ENCODE measurements at regions of chr12 and their contacts with region 1.

Region 1: GRCh38 chr12:49342066-49342913 is 4.4 kb upstream of the DNAJC22 start:
- DNase-seq: peak; percentile 86
- ATAC-seq: peak; percentile 72
- H3K4me3 ChIP-seq: peak overlapping the region; percentile 38 to 71 (median 58); a peak in 5 of 6 replicates
- H3K27ac ChIP-seq: no peak overlapping the region
- H3K4me1 ChIP-seq: peaks cover 51% of the 10 kb centered on the region
- H3K27me3 ChIP-seq: peaks cover 20 to 90% of the 10 kb centered on the region in 2 experiments; a peak in 4 of 5 replicates
- CTCF ChIP-seq: peak; percentile 91
- EP300 ChIP-seq: no peak
- POLR2A ChIP-seq: no peak
- RAD21 ChIP-seq: peak; percentile 82

Region 2: DNA sequence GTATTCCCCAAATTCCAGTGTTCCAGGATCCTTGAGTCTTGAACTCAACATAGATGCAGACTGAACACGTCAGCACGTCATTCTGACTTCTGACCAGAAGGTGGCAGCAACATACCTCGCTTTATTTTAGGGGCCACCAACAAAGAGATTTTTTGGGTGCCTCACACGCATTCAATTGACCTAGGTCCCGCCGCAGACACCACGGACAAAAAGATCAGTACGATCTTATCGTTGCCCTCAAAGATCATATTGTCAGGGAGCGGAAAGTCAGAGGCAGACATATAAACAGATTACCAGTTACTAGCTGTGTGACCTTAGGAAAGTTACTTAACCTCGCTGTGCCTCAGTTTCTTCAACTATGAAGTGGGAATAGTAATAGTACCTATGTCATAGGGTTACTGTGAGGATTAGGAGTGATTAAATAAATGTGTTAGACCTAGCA is 53.9 kb before region 1 on chr12:
- CTCF ChIA-PET with region 1: interaction called, 16 read pairs
- POLR2A ChIA-PET with region 1: interaction called, 4 read pairs
- in situ Hi-C with region 1: loop called (anchors 10 kb)
- intact Hi-C with region 1: loop called (anchors 2 kb)
- DNase-seq: peak; percentile 34
- ATAC-seq: peak; percentile 25; the same call in 1 of the 3 replicates
- H3K4me3 ChIP-seq: no peak overlapping the region
- H3K27ac ChIP-seq: no peak overlapping the region
- H3K4me1 ChIP-seq: peaks cover 24% of the 10 kb centered on the region
- H3K27me3 ChIP-seq: peaks cover 1 to 48% of the 10 kb centered on the region in 2 experiments
- CTCF ChIP-seq: peak; percentile 84
- EP300 ChIP-seq: no peak
- POLR2A ChIP-seq: no peak
- RAD21 ChIP-seq: peak; percentile 55; the same call in 1 of the 2 replicates

Region 3: DNA sequence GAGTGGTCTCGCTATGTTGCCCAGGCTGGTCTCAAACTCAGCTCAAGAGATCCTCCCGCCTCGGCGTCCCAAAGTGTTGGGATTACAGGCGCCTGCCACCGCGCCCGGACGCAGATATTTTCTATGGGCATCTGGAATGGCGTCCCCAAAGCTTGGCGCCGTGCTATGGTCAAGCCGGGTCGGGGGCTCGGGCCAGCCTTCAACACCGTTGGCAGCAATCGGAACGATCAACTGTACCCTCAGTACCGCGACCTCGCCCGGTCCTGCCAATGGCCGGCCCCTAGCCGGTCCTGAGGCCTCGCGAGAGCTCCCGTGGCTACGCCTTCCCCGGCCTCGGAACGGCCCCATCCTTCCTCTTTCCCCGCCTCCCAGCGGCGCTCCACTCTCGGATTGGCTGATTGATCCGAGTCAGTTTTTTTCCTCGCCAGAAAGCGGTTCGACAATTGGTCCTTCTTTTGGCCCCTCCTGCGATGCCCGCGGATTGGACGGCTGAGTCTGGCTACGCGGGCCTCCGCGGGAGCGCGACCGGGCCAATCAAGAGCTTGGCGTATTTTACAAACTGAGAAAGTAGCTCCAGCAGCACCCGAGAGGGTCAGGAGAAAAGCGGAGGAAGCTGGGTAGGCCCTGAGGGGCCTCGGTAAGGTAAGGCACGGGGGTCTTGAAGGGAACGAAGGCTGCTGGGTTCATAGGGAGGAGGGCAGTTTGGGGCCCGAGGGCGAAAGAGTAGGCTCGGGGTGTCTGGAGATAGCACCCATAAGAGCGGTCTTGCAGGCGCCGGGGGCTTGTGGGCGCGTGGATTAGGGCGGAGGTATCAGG is 19.4 kb before region 1 on chr12 and contains the start of gene TROAP:
- CTCF ChIA-PET with region 1: no interaction called
- POLR2A ChIA-PET with region 1: interaction called, 10 read pairs
- in situ Hi-C with region 1: no loop called
- intact Hi-C with region 1: loop called (anchors 1 kb)
- DNase-seq: peak; percentile 97
- ATAC-seq: peak; percentile 99
- H3K4me3 ChIP-seq: peak within 1 kb of the TSS; percentile 81 to 98 (median 96)
- H3K27ac ChIP-seq: peak within 1 kb of the TSS; percentile 75
- H3K4me1 ChIP-seq: peaks cover 15% of the 10 kb centered on the region
- H3K27me3 ChIP-seq: peaks cover 0 to 4% of the 10 kb centered on the region in 2 experiments; a peak in 1 of 5 replicates
- CTCF ChIP-seq: no peak
- EP300 ChIP-seq: no peak
- POLR2A ChIP-seq: peak; percentile 68 to 83
- RAD21 ChIP-seq: no peak
- total RNA-seq, gene TROAP: 27.0 and 30.9 TPM in 2 replicates

Region 4: DNA sequence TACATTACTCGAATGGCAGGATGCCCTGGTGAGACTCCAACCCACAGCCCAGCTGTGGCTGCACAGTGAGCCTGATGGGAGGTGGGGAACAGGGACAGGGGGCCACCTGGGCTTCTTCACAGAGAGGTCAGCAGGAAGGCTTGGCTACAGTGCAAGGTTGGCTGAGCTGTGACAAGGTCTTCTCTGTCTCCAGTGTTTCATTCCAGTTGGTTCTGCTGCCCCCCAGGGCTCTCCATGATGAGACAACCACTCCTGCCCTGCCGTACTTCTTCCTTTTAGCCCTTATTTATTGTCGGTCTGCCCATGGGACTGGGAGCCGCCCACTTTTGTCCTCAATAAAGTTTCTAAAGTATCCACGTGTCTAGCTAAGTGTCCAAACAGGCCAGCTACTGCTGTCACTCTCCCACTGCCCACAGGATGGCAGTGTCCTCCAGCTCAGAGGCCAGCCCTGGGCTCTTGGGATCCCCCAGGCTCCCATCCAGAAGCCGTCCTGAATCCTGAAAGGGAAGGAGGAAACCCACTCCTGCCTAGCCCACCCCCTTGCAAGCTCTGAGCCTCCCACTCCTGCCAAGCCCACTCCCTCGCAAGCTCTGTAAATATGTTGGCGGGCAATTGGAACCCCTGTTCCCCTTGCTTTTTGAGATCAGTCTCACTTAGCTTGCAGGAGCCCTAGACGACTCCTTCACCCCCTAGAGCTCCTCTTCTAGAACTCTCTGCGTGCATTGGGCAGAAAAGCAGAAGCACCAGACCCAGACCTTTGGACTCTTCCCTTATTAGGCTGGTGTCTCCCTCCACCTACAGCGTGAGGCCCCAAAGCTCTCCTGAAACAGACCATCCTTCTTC is 10.7 kb before region 1 on chr12:
- CTCF ChIA-PET with region 1: interaction called, 56 read pairs
- POLR2A ChIA-PET with region 1: interaction called, 18 read pairs
- in situ Hi-C with region 1: no loop called
- intact Hi-C with region 1: loop called (anchors 1 kb)
- DNase-seq: peak; percentile 53
- ATAC-seq: peak; percentile 89
- H3K4me3 ChIP-seq: no peak overlapping the region
- H3K27ac ChIP-seq: no peak overlapping the region
- H3K4me1 ChIP-seq: peaks cover 21% of the 10 kb centered on the region
- H3K27me3 ChIP-seq: peaks cover 0 to 12% of the 10 kb centered on the region in 2 experiments; a peak in 3 of 5 replicates
- CTCF ChIP-seq: peak; percentile 88
- EP300 ChIP-seq: no peak
- POLR2A ChIP-seq: no peak
- RAD21 ChIP-seq: peak; percentile 84

Region 5: GRCh38 chr12:49413796-49414195 is 71.5 kb after region 1 on chr12:
- CTCF ChIA-PET with region 1: no interaction called
- POLR2A ChIA-PET with region 1: no interaction called
- in situ Hi-C with region 1: no loop called
- intact Hi-C with region 1: no loop called
- DNase-seq: no peak
- ATAC-seq: no peak
- H3K4me3 ChIP-seq: no peak overlapping the region
- H3K27ac ChIP-seq: no peak overlapping the region
- H3K4me1 ChIP-seq: peaks cover 56% of the 10 kb centered on the region
- H3K27me3 ChIP-seq: no peaks in the 10 kb centered on the region
- CTCF ChIP-seq: no peak
- EP300 ChIP-seq: no peak
- POLR2A ChIP-seq: no peak
- RAD21 ChIP-seq: no peak

Measured in HepG2 (cell line).